Endothelial cell of umbilical vein (primary cell): ENCODE measurements at regions of chr19 and their contacts with region 1.

Region 1: GRCh38 chr19:37172368-37173366 is at the start of gene ZNF585A:
- DNase-seq: peak; percentile 97
- H3K4me3 ChIP-seq: peak within 1 kb of the TSS; percentile 49 to 95 (median 81)
- H3K27ac ChIP-seq: no peak within 1 kb of the TSS
- H3K4me1 ChIP-seq: peaks cover 3% of the 10 kb centered on the region
- H3K27me3 ChIP-seq: no peaks in the 10 kb centered on the region
- CTCF ChIP-seq: peak in 1 of 2 donors; percentile 24
- POLR2A ChIP-seq: peak; percentile 60
- total RNA-seq, gene ZNF585A: 6.0 and 6.7 TPM in 2 replicates

Region 2: DNA sequence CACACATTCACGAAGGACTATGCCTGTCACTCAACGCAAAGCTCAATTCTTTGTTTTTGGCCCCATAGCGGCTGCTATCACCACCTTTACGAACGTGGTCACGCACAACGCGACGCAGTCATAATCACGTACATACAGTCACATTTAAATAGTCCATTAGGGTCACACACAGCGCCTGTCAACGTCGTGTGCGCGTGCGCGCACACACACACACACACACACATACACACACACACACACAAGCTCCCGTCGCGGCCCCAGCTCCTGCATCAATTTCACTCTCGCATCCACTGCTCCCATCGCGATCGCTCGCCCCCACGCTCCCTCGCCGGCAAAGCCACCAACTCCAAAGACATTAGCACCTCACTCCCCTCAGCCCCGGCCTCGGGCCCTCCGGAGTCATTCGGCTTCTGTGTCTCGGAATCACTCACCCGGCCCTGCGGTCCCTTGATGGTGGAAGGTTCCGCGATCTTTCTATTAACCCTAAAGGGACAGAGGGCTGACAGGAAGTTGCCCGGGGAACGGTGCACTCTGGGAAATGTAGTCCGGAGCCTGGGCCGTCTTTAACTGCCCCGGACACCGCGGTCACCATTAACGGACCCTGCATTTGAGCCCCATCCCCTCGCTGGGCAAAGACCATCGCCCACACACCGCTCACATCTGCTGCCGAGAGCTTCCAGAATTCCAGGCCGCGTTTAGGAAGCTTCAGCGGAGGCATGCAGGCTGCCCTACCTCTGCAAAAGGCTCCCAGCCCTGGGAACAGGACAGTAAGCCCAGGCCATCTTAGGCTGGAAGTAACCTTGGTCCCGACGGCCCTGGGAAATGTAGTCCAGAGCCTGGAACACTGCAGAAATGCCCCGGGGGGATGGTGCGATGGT is 334.5 kb before region 1 on chr19 and contains the start of gene ZNF790:
- CTCF ChIA-PET with region 1: no interaction called
- POLR2A ChIA-PET with region 1: no interaction called
- dilution Hi-C with region 1: no loop called
- intact Hi-C with region 1: loop called (anchors 1 kb)
- DNase-seq: peak; percentile 91
- H3K4me3 ChIP-seq: peak within 1 kb of the TSS; percentile 37 to 64 (median 43)
- H3K27ac ChIP-seq: peak within 1 kb of the TSS; percentile 44
- H3K4me1 ChIP-seq: peaks cover 3% of the 10 kb centered on the region
- H3K27me3 ChIP-seq: no peaks in the 10 kb centered on the region
- CTCF ChIP-seq: no peak
- POLR2A ChIP-seq: peak; percentile 44
- total RNA-seq, gene ZNF790: 5.2 and 5.6 TPM in 2 replicates

Region 3: GRCh38 chr19:37077934-37078725 is 94.5 kb before region 1 on chr19 and contains the start of gene ZNF420:
- CTCF ChIA-PET with region 1: no interaction called
- POLR2A ChIA-PET with region 1: no interaction called
- dilution Hi-C with region 1: no loop called
- intact Hi-C with region 1: loop called (anchors 1 kb)
- DNase-seq: peak; percentile 94
- H3K4me3 ChIP-seq: peak within 1 kb of the TSS; percentile 66 to 80 (median 77)
- H3K27ac ChIP-seq: peak within 1 kb of the TSS; percentile 28
- H3K4me1 ChIP-seq: peaks cover 9% of the 10 kb centered on the region
- H3K27me3 ChIP-seq: no peaks in the 10 kb centered on the region
- CTCF ChIP-seq: no peak
- POLR2A ChIP-seq: peak; percentile 64
- total RNA-seq, gene ZNF420: 4.2 and 5.3 TPM in 2 replicates

Region 4: GRCh38 chr19:37470216-37470615 is 297.5 kb after region 1 on chr19:
- CTCF ChIA-PET with region 1: no interaction called
- POLR2A ChIA-PET with region 1: no interaction called
- dilution Hi-C with region 1: no loop called
- intact Hi-C with region 1: no loop called
- DNase-seq: no peak
- H3K4me3 ChIP-seq: peak overlapping the region in 1 of 3 experiments; percentile 80
- H3K27ac ChIP-seq: no peak overlapping the region
- H3K4me1 ChIP-seq: peaks cover 5% of the 10 kb centered on the region
- H3K27me3 ChIP-seq: no peaks in the 10 kb centered on the region
- CTCF ChIP-seq: no peak
- POLR2A ChIP-seq: no peak